ENCODE measurements at regions of chr1 and their contacts with region 1.

Region 1: DNA sequence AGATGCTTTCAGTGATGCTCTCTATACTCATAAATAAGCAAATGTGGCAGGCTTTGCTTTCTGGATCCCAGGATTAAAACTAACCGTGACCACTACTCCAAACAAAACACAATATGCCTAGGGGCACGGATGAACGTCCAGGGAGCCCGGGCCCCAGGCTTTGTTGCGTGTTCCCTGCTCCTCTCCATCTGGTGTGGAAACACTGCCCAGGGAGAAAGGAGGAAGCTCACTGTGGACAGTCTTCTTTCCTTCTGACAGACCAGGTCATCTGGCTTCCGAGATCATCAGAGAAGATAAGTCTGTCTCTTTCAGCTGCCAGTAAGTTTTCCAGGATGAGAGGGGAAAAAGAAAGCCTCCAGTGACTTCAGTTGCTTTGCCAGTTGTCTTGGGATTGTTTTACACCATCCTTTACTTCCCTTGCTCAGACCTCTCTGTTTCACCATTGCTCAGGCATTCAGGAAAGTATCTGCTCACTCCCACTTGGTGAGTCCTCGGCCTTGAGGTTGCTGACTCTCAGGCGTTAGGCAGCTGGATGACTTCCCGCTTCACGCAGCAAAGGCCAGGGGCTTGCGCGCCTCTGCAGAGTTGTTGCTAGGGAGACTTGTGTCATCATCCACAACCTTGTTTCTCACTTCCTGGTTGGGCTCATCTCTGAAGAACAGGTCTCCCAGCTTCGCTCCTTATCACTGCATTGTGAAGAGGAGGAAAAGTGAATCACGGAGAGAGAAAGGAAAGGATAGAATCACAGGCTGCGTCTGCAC is 20.6 kb upstream of the PGD start:
- DNase-seq: peak; percentile 50
- ATAC-seq: peak; percentile 43

Region 2: GRCh38 chr1:9929431-9930385 is 448.6 kb before region 1 on chr1:
- intact Hi-C with region 1: no loop called
- DNase-seq: no peak
- ATAC-seq: peak; percentile 39

Region 3: DNA sequence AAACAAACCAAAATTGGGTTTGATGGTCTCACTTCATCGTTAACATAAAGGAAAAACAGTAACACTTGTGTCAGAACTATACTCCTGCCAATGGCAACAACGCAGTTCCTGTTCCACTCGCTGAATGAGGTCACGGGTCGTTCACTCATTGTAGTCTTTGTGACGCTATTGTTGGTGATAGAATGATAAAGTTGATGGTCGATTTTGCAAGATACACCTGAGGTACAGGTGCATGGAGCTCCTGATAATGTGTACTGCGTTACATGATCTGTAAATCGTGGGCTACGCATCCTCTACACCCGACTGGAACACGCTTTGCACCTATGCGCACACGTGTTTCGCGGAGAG is 51.6 kb after region 1 on chr1:
- intact Hi-C with region 1: loop called (anchors 10 kb)
- DNase-seq: no peak
- ATAC-seq: no peak

Measured in left ventricle myocardium superior (tissue), 1 donor.